HEK293 (cell line): ENCODE measurements at regions of chr3 and their contacts with region 1.

Region 1: DNA sequence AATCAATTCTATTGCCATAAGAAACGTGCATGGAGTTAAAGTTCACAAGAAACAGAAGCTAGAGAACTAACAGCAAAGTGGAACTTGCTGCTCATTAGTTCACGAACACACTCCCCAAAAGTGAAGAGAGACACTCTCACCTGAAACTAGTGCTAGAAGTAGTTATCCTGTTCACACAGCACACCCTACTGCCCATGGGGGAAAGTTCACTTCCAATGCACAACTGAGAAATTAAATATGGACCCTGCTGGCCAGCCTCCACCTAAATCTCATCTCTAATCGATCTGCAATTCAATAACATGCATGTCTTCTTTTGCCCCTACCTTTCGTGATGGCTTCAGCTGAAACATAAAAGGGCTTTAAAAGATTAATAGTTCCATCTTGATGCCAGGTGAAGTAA is 39.4 kb upstream of the FRMD4B start:
- H3K4me3 ChIP-seq: no peak overlapping the region
- H3K27ac ChIP-seq: no peak overlapping the region
- H3K4me1 ChIP-seq: no peaks in the 10 kb centered on the region
- CTCF ChIP-seq: peak; percentile 26; the same call in 1 of the 2 replicates

Region 2: GRCh38 chr3:69671082-69671952 is 246.1 kb after region 1 on chr3:
- CTCF ChIA-PET with region 1: interaction called, 11 read pairs
- POLR2A ChIA-PET with region 1: no interaction called
- H3K4me3 ChIP-seq: no peak overlapping the region
- H3K27ac ChIP-seq: no peak overlapping the region
- H3K4me1 ChIP-seq: no peaks in the 10 kb centered on the region
- CTCF ChIP-seq: no peak